Calu3 (cell line): ENCODE measurements at regions of chr14 and their contacts with region 1.

Region 1: DNA sequence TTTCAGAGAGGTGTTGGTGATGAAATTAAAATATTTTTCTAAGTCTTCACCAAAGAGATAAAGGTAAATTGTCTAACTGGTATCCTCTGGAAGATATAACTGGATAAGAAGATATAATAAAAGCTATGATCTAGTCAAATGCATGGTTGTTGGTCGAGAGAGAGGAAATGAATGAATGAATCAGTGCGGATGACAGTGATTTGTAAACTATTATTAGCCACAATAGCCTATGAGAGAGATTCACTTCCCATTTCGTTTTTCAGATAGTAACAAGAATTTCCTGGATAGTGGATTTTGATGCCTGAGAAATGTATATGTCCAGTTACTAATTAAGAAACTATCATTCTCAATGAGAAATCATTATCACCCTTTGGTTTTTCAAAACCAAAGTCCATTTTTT is 63.1 kb downstream of the HEATR5A start:
- DNase-seq: no peak
- H3K4me3 Mint-ChIP-seq: no peak overlapping the region
- H3K27ac Mint-ChIP-seq: no peak overlapping the region
- H3K4me1 Mint-ChIP-seq: no peaks in the 10 kb centered on the region
- H3K27me3 Mint-ChIP-seq: no peaks in the 10 kb centered on the region
- CTCF ChIP-seq: no peak

Region 2: DNA sequence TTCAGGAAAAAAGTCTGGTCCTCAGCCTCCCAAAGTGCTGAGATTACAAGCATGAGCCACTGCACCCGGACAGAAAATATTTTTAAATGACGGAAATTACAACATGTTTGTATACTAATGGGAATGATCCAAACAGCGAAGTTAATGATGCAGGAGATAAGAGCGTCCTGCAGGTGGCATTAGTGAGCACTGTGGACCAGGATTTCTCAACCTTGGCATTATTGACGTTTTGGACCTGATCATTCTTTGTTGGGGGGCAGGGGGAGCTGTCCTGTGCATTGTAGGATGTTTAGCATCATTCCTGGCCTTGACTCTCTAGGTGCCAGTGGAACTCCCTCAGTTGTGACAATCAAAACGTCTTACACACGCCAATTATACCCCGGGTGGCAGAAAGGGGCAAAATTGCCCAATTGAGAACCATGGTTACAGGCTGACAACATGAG is 701.1 kb before region 1 on chr14:
- CTCF ChIA-PET with region 1: no interaction called
- intact Hi-C with region 1: loop called (anchors 5 kb)
- DNase-seq: peak; percentile 29
- H3K4me3 Mint-ChIP-seq: no peak overlapping the region
- H3K27ac Mint-ChIP-seq: no peak overlapping the region
- H3K4me1 Mint-ChIP-seq: no peaks in the 10 kb centered on the region
- H3K27me3 Mint-ChIP-seq: no peaks in the 10 kb centered on the region
- CTCF ChIP-seq: peak; percentile 59

Region 3: GRCh38 chr14:30982533-30982932 is 374.7 kb before region 1 on chr14:
- CTCF ChIA-PET with region 1: no interaction called
- intact Hi-C with region 1: loop called (anchors 2 kb)
- DNase-seq: no peak
- H3K4me3 Mint-ChIP-seq: no peak overlapping the region
- H3K27ac Mint-ChIP-seq: no peak overlapping the region
- H3K4me1 Mint-ChIP-seq: peaks cover 17% of the 10 kb centered on the region
- H3K27me3 Mint-ChIP-seq: no peaks in the 10 kb centered on the region
- CTCF ChIP-seq: no peak

Region 4: DNA sequence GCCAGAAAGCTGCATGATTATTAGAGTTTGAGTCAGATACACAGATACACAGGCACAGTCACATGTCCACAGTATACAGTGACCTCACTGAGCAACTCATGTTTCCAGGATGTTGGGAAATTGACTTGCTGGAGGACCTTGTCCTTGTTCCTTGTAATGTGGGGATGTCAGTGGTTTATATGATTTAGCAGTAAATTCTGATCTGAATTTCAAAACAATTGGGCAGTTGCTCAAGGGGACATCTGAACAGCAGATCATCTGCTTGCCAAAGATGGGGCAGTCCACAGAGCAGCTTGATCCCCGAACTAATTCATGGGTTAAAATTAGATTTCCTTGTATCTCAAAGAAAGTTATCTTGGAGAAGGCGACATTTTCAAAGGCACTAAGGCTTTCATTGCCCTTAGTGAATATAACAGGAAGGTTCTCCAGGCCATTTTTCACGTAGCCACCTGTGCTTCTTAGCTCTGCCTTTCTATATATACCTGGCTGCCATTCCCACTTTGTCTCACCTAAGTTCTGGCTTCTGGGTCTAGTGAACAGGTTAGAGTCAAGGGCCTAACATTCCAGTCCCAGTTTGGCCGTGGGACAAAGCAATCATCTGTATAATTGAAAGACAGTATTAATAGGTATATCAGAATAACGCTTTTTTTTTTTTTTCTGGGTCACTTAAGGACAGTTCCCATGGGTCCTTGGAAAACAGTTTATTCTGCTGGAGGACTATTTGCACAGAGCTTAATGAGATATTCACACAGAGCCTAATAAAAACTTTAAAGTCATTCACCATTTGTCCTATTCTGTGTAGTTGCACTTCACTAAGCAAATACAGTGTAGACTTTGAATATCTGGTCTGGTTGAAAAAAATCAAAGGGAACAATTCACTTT is 266.2 kb before region 1 on chr14:
- CTCF ChIA-PET with region 1: no interaction called
- intact Hi-C with region 1: loop called (anchors 5 kb)
- DNase-seq: peak; percentile 28
- H3K4me3 Mint-ChIP-seq: no peak overlapping the region
- H3K27ac Mint-ChIP-seq: peak overlapping the region; percentile 71
- H3K4me1 Mint-ChIP-seq: peaks cover 12% of the 10 kb centered on the region
- H3K27me3 Mint-ChIP-seq: no peaks in the 10 kb centered on the region
- CTCF ChIP-seq: no peak

Region 5: GRCh38 chr14:31142455-31143087 is 214.7 kb before region 1 on chr14:
- CTCF ChIA-PET with region 1: no interaction called
- intact Hi-C with region 1: loop called (anchors 10 kb)
- DNase-seq: no peak
- H3K4me3 Mint-ChIP-seq: no peak overlapping the region
- H3K27ac Mint-ChIP-seq: no peak overlapping the region
- H3K4me1 Mint-ChIP-seq: no peaks in the 10 kb centered on the region
- H3K27me3 Mint-ChIP-seq: no peaks in the 10 kb centered on the region
- CTCF ChIP-seq: no peak